CD4-positive, alpha-beta memory T cell (primary cell): ENCODE measurements at regions of chrX and their contacts with region 1.

Region 1: DNA sequence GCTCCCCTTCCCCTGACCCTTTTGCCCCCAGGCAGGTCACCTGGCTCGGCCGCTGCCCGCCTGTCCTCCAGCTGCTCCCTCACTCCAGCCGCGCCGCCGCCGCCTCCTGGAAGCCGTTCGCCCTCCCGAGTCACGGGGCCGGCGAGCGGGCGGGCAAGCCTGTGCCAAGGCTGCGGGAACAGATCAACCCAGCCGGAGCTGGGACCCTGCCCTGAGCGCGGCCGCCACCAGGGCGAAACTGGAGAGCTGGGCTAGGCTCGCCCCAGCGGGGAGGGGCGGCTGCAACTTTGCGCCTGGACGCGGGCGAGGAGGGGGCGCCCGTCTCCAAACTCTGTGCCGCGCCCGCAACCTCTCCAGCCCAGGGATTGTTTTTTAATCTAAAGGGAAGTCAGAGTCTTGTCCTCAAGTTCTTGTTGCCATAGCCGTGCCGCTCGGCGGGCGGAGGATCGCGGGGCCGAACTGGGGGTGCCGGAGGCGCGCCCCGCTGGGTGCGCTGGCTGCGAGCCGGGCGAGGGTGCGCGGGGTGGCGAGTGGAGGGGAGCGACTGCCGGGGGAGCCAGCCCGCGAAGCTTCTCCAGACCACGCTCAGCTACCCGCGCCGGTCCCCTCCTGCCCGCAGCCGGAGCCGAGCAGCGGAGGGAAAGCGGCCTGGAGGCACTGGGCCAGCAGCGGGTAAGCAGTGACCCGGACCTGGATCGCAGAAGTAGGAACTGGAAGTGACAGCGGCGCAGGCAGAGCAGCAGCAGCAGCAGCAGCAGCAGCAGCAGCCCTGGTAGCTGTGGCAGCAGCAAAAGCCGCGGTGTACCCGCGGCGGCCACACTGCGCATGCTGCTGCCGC is 13.4 kb downstream of the ARHGEF6 start:
- DNase-seq: peak; percentile 38 to 63 (median 58)
- H3K4me3 ChIP-seq: peak overlapping the region in 1 of 2 donors; percentile 41
- H3K4me3 Mint-ChIP-seq: peak overlapping the region; percentile 77 to 96 (median 82)
- H3K27ac ChIP-seq: peak overlapping the region; percentile 51
- H3K27ac Mint-ChIP-seq: peak overlapping the region in 6 of 7 donors; percentile 82 to 97 (median 93)
- H3K4me1 ChIP-seq: peaks cover 68% of the 10 kb centered on the region
- H3K4me1 Mint-ChIP-seq: peaks cover 37 to 74% (median 53%) of the 10 kb centered on the region in 4 donors
- H3K27me3 ChIP-seq: no peaks in the 10 kb centered on the region
- H3K27me3 Mint-ChIP-seq: no peaks in the 10 kb centered on the region

Region 2: DNA sequence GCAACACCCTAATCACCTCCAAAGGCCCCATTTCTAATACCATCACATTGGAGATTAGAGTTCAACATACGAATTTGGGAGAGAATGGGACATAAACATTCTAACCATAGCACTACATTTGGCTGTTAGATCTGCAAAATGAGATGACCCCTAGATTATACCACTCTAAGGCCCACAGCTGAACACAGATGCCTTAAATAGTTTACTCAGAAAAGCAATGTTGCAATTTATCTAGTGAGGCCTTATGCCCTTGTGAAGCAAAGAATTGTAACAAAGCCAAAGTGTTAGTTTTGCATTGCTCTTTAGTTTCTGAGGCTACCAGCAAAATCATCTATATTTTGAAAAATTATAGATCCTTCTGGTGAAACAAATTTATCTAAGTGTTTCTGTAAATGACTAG is 45.0 kb after region 1 on chrX:
- CTCF ChIA-PET with region 1: no interaction called
- POLR2A ChIA-PET with region 1: interaction called, 3 read pairs
- intact Hi-C with region 1: loop called (anchors 5 kb)
- DNase-seq: no peak
- H3K4me3 ChIP-seq: no peak overlapping the region
- H3K4me3 Mint-ChIP-seq: no peak overlapping the region
- H3K27ac ChIP-seq: no peak overlapping the region
- H3K27ac Mint-ChIP-seq: no peak overlapping the region
- H3K4me1 ChIP-seq: peaks cover 8% of the 10 kb centered on the region
- H3K4me1 Mint-ChIP-seq: peaks cover 6 to 10% (median 7%) of the 10 kb centered on the region in 4 donors
- H3K27me3 ChIP-seq: no peaks in the 10 kb centered on the region
- H3K27me3 Mint-ChIP-seq: no peaks in the 10 kb centered on the region